Calu3 (cell line): ENCODE measurements at regions of chr18 and their contacts with region 1.

Region 1: GRCh38 chr18:39886136-39886535 is 2068.9 kb upstream of the PIK3C3 start:
- DNase-seq: no peak
- H3K4me3 Mint-ChIP-seq: no peak overlapping the region
- H3K27ac Mint-ChIP-seq: no peak overlapping the region
- H3K4me1 Mint-ChIP-seq: no peaks in the 10 kb centered on the region
- H3K27me3 Mint-ChIP-seq: no peaks in the 10 kb centered on the region
- CTCF ChIP-seq: no peak

Region 2: GRCh38 chr18:39976771-39977170 is 90.6 kb after region 1 on chr18:
- CTCF ChIA-PET with region 1: no interaction called
- intact Hi-C with region 1: loop called (anchors 5 kb)
- DNase-seq: no peak
- H3K4me3 Mint-ChIP-seq: no peak overlapping the region
- H3K27ac Mint-ChIP-seq: no peak overlapping the region
- H3K4me1 Mint-ChIP-seq: no peaks in the 10 kb centered on the region
- H3K27me3 Mint-ChIP-seq: no peaks in the 10 kb centered on the region
- CTCF ChIP-seq: no peak